Activated CD4-positive, alpha-beta memory T cell treated with anti-CD3 and anti-CD28 coated beads for 36 hours (primary cell): ENCODE measurements at regions of chr17 and their contacts with region 1.

Region 1: GRCh38 chr17:35930211-35931065 is at the start of gene RDM1:
- DNase-seq: peak; percentile 94
- H3K4me3 Mint-ChIP-seq: peak within 1 kb of the TSS; percentile 79
- H3K27ac Mint-ChIP-seq: peak within 1 kb of the TSS; percentile 62
- H3K4me1 Mint-ChIP-seq: peaks cover 23% of the 10 kb centered on the region
- H3K27me3 Mint-ChIP-seq: peaks cover 2% of the 10 kb centered on the region
- total RNA-seq, gene RDM1: 10.4 to 10.6 TPM

Region 2: GRCh38 chr17:35898283-35899070 is 32.0 kb before region 1 on chr17:
- CTCF ChIA-PET with region 1: no interaction called
- POLR2A ChIA-PET with region 1: no interaction called
- intact Hi-C with region 1: loop called (anchors 2 kb)
- DNase-seq: peak; percentile 77
- H3K4me3 Mint-ChIP-seq: peak overlapping the region; percentile 46
- H3K27ac Mint-ChIP-seq: peak overlapping the region; percentile 78
- H3K4me1 Mint-ChIP-seq: peaks cover 39% of the 10 kb centered on the region
- H3K27me3 Mint-ChIP-seq: no peaks in the 10 kb centered on the region